ENCODE measurements at regions of chr4 and their contacts with region 1.

Region 1: DNA sequence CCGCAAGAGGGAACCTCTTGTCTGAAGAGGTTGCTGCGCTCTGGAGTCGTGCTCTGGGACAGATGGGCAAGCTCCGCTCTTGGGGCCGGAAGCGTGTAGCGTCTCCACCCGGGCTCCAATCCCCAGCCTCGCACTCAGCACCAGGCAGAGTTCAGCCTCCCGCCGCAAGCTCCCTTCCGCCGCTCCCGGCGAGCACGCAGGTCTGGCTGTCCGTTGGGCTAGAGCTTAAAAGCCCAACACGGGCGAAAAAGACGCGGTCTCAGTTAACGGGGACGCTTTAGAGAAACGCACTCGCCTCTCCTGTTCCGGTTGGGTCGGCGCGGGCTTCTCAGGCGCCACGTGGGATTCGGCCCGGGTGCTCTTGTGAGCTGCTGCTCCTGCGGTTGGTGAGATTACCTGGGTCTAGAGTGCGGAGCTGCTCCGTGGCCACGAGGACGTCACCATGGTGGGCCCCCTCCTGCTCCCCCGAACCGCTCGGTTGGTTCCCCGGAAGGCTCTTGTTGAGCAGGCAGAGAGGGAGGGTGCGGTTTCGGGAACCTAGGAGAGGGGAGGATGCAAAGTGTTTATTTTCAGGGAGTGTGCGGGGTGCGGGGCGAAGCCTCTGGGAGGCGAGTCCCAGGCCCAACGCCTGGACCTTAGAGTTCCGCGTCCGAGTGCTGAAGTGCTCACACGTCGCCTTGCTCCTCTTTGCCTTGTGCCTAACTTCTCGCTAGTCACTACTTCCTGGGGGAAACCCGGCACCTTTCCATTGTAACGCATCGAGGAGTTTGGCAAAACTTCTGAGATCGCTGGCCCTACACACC is at the start of gene TMA16:
- DNase-seq: peak; percentile 75
- ATAC-seq: peak; percentile 66
- H3K4me3 Mint-ChIP-seq: peak within 1 kb of the TSS; percentile 99
- H3K27ac Mint-ChIP-seq: peak within 1 kb of the TSS; percentile 99
- H3K4me1 Mint-ChIP-seq: peaks cover 43% of the 10 kb centered on the region
- H3K27me3 Mint-ChIP-seq: no peaks in the 10 kb centered on the region
- CTCF ChIP-seq: no peak
- total RNA-seq, gene TMA16: 52.5 and 54.1 TPM in 2 replicates

Region 2: GRCh38 chr4:162560073-162560472 is 934.5 kb before region 1 on chr4:
- CTCF ChIA-PET with region 1: no interaction called
- POLR2A ChIA-PET with region 1: no interaction called
- intact Hi-C with region 1: no loop called
- DNase-seq: no peak
- ATAC-seq: no peak
- H3K4me3 Mint-ChIP-seq: no peak overlapping the region
- H3K27ac Mint-ChIP-seq: no peak overlapping the region
- H3K4me1 Mint-ChIP-seq: no peaks in the 10 kb centered on the region
- H3K27me3 Mint-ChIP-seq: no peaks in the 10 kb centered on the region
- CTCF ChIP-seq: no peak

Region 3: GRCh38 chr4:163166041-163166579 is 328.5 kb before region 1 on chr4:
- CTCF ChIA-PET with region 1: no interaction called
- POLR2A ChIA-PET with region 1: interaction called, 11 read pairs
- intact Hi-C with region 1: loop called (anchors 1 kb)
- DNase-seq: peak; percentile 63
- ATAC-seq: peak; percentile 64
- H3K4me3 Mint-ChIP-seq: peak overlapping the region; percentile 91
- H3K27ac Mint-ChIP-seq: peak overlapping the region; percentile 95
- H3K4me1 Mint-ChIP-seq: peaks cover 27% of the 10 kb centered on the region
- H3K27me3 Mint-ChIP-seq: no peaks in the 10 kb centered on the region
- CTCF ChIP-seq: no peak

Region 4: DNA sequence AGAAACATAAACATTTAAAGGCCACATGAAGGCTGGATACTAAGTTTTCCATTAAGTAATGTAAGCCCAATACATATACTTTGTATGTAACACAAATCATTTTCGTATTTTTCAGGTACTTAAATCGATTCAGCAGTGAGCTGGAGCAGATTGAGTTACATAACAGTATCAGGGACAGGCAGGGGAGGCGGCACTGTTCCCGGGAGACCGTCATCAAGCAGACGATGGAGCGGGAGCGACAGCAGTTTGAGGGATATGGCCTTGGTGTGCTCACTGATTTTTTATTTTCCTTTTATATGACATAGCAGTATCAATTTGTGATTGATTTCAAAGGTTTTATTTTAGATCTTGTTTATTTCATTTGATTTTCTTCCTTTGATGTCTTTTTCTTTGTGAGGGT is 20.6 kb after region 1 on chr4:
- CTCF ChIA-PET with region 1: no interaction called
- POLR2A ChIA-PET with region 1: interaction called, 3 read pairs
- intact Hi-C with region 1: loop called (anchors 2 kb)
- DNase-seq: no peak
- ATAC-seq: no peak
- H3K4me3 Mint-ChIP-seq: no peak overlapping the region
- H3K27ac Mint-ChIP-seq: no peak overlapping the region
- H3K4me1 Mint-ChIP-seq: no peaks in the 10 kb centered on the region
- H3K27me3 Mint-ChIP-seq: no peaks in the 10 kb centered on the region
- CTCF ChIP-seq: no peak

Region 5: GRCh38 chr4:163611784-163612445 is 117.4 kb after region 1 on chr4:
- CTCF ChIA-PET with region 1: no interaction called
- POLR2A ChIA-PET with region 1: interaction called, 15 read pairs
- intact Hi-C with region 1: loop called (anchors 2 kb)
- DNase-seq: no peak
- ATAC-seq: peak; percentile 38
- H3K4me3 Mint-ChIP-seq: peak overlapping the region; percentile 89
- H3K27ac Mint-ChIP-seq: peak overlapping the region; percentile 98
- H3K4me1 Mint-ChIP-seq: peaks cover 74% of the 10 kb centered on the region
- H3K27me3 Mint-ChIP-seq: no peaks in the 10 kb centered on the region
- CTCF ChIP-seq: no peak

Region 6: DNA sequence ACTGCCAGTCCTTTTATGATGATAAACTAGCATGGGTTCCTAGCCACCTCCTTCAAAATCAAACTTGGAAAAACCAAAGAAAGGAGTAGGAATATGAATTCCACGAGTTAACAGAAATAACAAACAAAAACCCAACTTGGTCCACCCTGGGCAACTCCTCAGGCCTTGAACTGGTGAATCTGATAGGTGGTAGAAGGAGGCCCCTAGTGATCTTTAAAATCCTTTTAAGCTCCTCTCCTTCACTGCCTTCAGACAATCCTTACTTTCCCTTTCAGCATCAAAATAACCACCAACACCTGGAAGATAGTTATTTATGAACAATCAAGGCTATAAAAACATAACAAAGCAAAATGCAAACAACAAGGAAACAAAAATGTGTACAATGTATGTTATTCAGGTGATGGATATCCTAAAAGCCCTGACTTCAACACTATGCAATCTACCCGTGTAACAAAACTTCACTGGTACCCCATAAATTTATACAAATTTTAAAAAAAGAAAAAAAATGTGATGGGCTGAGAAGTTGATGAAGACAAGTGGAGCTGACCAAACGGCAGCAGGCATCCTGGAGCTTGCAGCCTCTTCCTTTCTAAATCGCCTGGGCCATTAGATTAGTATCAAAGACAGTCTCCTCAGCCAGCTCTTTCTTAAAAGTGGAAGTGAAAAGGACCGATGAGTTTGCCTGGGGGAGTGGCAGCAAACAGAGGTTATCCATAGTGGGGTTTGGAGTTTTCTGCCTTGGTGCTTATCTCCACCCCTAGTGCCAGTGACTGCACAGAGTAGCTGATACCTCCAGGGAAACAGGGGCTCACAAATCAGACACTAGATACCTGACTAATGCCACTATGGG is 179.5 kb after region 1 on chr4:
- CTCF ChIA-PET with region 1: no interaction called
- POLR2A ChIA-PET with region 1: interaction called, 10 read pairs
- intact Hi-C with region 1: no loop called
- DNase-seq: no peak
- ATAC-seq: peak; percentile 89
- H3K4me3 Mint-ChIP-seq: peak overlapping the region; percentile 44
- H3K27ac Mint-ChIP-seq: peak overlapping the region; percentile 88
- H3K4me1 Mint-ChIP-seq: peaks cover 50% of the 10 kb centered on the region
- H3K27me3 Mint-ChIP-seq: no peaks in the 10 kb centered on the region
- CTCF ChIP-seq: no peak

Region 7: GRCh38 chr4:164753872-164754488 is 1259.4 kb after region 1 on chr4 and contains the start of gene SMIM31:
- CTCF ChIA-PET with region 1: no interaction called
- POLR2A ChIA-PET with region 1: interaction called, 14 read pairs
- intact Hi-C with region 1: no loop called
- DNase-seq: no peak
- ATAC-seq: no peak
- H3K4me3 Mint-ChIP-seq: no peak within 1 kb of the TSS
- H3K27ac Mint-ChIP-seq: no peak within 1 kb of the TSS
- H3K4me1 Mint-ChIP-seq: no peaks in the 10 kb centered on the region
- H3K27me3 Mint-ChIP-seq: no peaks in the 10 kb centered on the region
- CTCF ChIP-seq: no peak
- total RNA-seq, gene SMIM31: not detected in 2 replicates